Naive thymus-derived CD4-positive, alpha-beta T cell (primary cell): ENCODE measurements at regions of chr17 and their contacts with region 1.

Region 1: DNA sequence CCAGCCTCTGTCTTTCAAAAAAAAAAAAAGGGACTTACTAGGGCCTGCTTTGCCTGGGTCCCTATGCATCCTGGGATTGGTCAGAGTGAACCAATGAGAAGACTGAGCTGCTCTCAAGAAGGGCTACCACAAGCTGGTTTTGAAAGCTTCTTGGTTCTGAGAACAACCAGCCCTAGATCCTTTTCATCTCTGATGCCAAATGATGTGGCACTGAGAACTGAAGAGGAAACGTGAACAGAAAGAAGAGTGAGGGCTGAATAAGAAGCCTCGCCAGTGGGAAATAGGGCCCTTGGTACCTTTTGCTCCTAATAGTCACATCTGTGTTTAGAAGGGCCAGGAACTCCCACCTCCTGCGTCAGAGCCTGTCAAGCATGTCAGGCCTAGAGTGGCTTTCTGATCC is 10.7 kb downstream of the TACO1 start:
- DNase-seq: peak in 5 of 9 donors; percentile 3 to 57 (median 25)
- ATAC-seq: peak; percentile 47
- H3K4me3 ChIP-seq: no peak overlapping the region
- H3K4me3 Mint-ChIP-seq: peak overlapping the region in 9 of 10 donors; percentile 10 to 74 (median 58)
- H3K27ac ChIP-seq: peak overlapping the region; percentile 52
- H3K27ac Mint-ChIP-seq: peak overlapping the region; percentile 85 to 98 (median 93)
- H3K4me1 ChIP-seq: peaks cover 25 to 28% of the 10 kb centered on the region in 2 donors
- H3K4me1 Mint-ChIP-seq: peaks cover 22 to 30% (median 29%) of the 10 kb centered on the region in 7 donors
- H3K27me3 ChIP-seq: no peaks in the 10 kb centered on the region
- H3K27me3 Mint-ChIP-seq: no peaks in the 10 kb centered on the region

Region 2: DNA sequence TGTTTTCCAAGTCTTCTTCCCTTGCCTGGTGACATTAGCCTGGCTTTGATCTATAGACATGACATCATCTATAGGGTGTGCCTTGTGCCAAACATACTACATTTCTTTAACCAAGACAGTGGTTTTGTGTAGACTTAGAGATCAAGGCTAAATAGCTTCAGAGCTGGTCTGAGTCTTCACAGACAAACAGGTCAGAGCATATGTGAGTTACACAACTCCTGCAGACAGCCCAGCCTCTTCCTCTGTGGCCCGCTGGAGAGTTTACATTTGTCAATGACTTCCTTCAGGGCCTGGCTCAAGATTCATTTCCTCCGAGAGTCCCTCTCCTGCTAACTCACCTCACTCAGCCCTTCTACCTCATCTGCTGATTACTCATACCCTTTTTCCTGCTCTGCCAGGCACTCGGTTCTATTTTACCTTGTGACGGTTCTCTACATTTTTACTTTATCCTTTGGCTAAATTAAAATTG is 718.5 kb before region 1 on chr17:
- CTCF ChIA-PET with region 1: no interaction called
- POLR2A ChIA-PET with region 1: no interaction called
- intact Hi-C with region 1: no loop called
- DNase-seq: peak in 1 of 9 donors; percentile 1
- ATAC-seq: peak; percentile 86
- H3K4me3 ChIP-seq: no peak overlapping the region
- H3K4me3 Mint-ChIP-seq: no peak overlapping the region
- H3K27ac ChIP-seq: no peak overlapping the region
- H3K27ac Mint-ChIP-seq: peak overlapping the region in 3 of 9 donors; percentile 5 to 87 (median 51)
- H3K4me1 ChIP-seq: no peaks in the 10 kb centered on the region
- H3K4me1 Mint-ChIP-seq: peaks cover 0 to 12% (median 8%) of the 10 kb centered on the region in 7 donors
- H3K27me3 ChIP-seq: no peaks in the 10 kb centered on the region
- H3K27me3 Mint-ChIP-seq: peaks cover 1 to 14% (median 3%) of the 10 kb centered on the region in 5 donors

Region 3: GRCh38 chr17:63478791-63479494 is 132.4 kb before region 1 on chr17:
- CTCF ChIA-PET with region 1: no interaction called
- POLR2A ChIA-PET with region 1: interaction called, 3 read pairs
- intact Hi-C with region 1: loop called (anchors 1 to 2 kb)
- DNase-seq: peak; percentile 41 to 75 (median 59)
- ATAC-seq: peak; percentile 84
- H3K4me3 ChIP-seq: no peak overlapping the region
- H3K4me3 Mint-ChIP-seq: peak overlapping the region in 9 of 10 donors; percentile 13 to 67 (median 49)
- H3K27ac ChIP-seq: no peak overlapping the region
- H3K27ac Mint-ChIP-seq: no peak overlapping the region
- H3K4me1 ChIP-seq: peaks cover 5 to 14% of the 10 kb centered on the region in 2 donors
- H3K4me1 Mint-ChIP-seq: peaks cover 0 to 18% (median 8%) of the 10 kb centered on the region in 7 donors
- H3K27me3 ChIP-seq: peaks cover 0 to 12% of the 10 kb centered on the region in 2 donors
- H3K27me3 Mint-ChIP-seq: peaks cover 13 to 44% (median 23%) of the 10 kb centered on the region in 5 donors

Region 4: DNA sequence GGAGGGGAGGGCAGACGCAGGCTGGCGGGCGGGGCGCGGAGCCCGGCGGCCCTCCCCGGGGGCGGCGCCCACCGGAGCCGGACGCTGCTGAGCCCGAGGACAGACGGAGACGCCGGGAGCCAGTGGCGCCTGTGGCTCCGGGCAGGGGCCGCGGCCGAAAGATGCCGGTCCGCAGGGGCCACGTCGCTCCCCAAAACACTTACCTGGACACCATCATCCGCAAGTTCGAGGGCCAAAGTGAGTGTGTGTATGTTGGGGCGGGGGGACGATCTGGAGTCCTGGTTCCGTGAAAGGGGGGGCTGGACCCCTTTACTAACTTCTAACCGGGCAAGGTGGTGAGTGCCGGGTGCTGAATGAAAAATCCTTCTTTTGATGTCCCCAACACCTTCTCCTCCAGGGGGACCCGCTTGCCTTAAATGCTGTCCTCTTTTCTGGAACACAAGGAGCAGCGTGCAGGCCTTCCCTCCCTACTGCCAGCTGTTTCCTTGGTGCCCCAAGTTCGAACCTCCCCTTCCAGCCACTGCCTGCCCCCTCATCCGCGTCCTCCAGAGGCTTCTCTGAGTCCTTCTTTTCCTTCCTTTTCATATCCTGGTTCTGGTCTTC is 88.0 kb before region 1 on chr17 and contains the start of gene KCNH6:
- CTCF ChIA-PET with region 1: no interaction called
- POLR2A ChIA-PET with region 1: no interaction called
- intact Hi-C with region 1: no loop called
- DNase-seq: peak in 1 of 9 donors; percentile 30
- ATAC-seq: no peak
- H3K4me3 ChIP-seq: no peak within 1 kb of the TSS
- H3K4me3 Mint-ChIP-seq: peak within 1 kb of the TSS in 5 of 10 donors; percentile 13 to 57 (median 17)
- H3K27ac ChIP-seq: no peak within 1 kb of the TSS
- H3K27ac Mint-ChIP-seq: peak within 1 kb of the TSS in 2 of 9 donors; percentile 25 to 73
- H3K4me1 ChIP-seq: no peaks in the 10 kb centered on the region
- H3K4me1 Mint-ChIP-seq: peaks cover 0 to 8% (median 5%) of the 10 kb centered on the region in 7 donors
- H3K27me3 ChIP-seq: peaks cover 0 to 3% of the 10 kb centered on the region in 2 donors
- H3K27me3 Mint-ChIP-seq: peaks cover 23 to 33% (median 29%) of the 10 kb centered on the region in 5 donors
- total RNA-seq, gene KCNH6: not detected

Region 5: GRCh38 chr17:63600569-63601438 is 10.6 kb before region 1 on chr17 and contains the start of gene TACO1:
- CTCF ChIA-PET with region 1: interaction called, 13 read pairs
- POLR2A ChIA-PET with region 1: interaction called, 14 read pairs
- intact Hi-C with region 1: loop called in 1 of 2 experiments (anchors 1 kb)
- DNase-seq: peak; percentile 54 to 83 (median 71)
- ATAC-seq: peak; percentile 96
- H3K4me3 ChIP-seq: peak within 1 kb of the TSS; percentile 68
- H3K4me3 Mint-ChIP-seq: peak within 1 kb of the TSS; percentile 92 to 97 (median 95)
- H3K27ac ChIP-seq: peak within 1 kb of the TSS; percentile 86
- H3K27ac Mint-ChIP-seq: peak within 1 kb of the TSS; percentile 93 to 98 (median 97)
- H3K4me1 ChIP-seq: peaks cover 17 to 34% of the 10 kb centered on the region in 2 donors
- H3K4me1 Mint-ChIP-seq: peaks cover 19 to 38% (median 25%) of the 10 kb centered on the region in 7 donors
- H3K27me3 ChIP-seq: no peaks in the 10 kb centered on the region
- H3K27me3 Mint-ChIP-seq: no peaks in the 10 kb centered on the region
- total RNA-seq, gene TACO1: 11.1 to 20.3 (median 15.2) TPM

Region 6: GRCh38 chr17:63714547-63715277 is 103.4 kb after region 1 on chr17:
- CTCF ChIA-PET with region 1: interaction called, 9 read pairs
- POLR2A ChIA-PET with region 1: no interaction called
- intact Hi-C with region 1: loop called in 1 of 2 experiments (anchors 1 kb)
- DNase-seq: no peak
- ATAC-seq: no peak
- H3K4me3 ChIP-seq: no peak overlapping the region
- H3K4me3 Mint-ChIP-seq: no peak overlapping the region
- H3K27ac ChIP-seq: no peak overlapping the region
- H3K27ac Mint-ChIP-seq: peak overlapping the region in 3 of 9 donors; percentile 41 to 76 (median 62)
- H3K4me1 ChIP-seq: peaks cover 4 to 11% of the 10 kb centered on the region in 2 donors
- H3K4me1 Mint-ChIP-seq: peaks cover 7 to 21% (median 15%) of the 10 kb centered on the region in 7 donors
- H3K27me3 ChIP-seq: no peaks in the 10 kb centered on the region
- H3K27me3 Mint-ChIP-seq: no peaks in the 10 kb centered on the region